ENCODE measurements at regions of chr20 and their contacts with region 1.

Region 1: DNA sequence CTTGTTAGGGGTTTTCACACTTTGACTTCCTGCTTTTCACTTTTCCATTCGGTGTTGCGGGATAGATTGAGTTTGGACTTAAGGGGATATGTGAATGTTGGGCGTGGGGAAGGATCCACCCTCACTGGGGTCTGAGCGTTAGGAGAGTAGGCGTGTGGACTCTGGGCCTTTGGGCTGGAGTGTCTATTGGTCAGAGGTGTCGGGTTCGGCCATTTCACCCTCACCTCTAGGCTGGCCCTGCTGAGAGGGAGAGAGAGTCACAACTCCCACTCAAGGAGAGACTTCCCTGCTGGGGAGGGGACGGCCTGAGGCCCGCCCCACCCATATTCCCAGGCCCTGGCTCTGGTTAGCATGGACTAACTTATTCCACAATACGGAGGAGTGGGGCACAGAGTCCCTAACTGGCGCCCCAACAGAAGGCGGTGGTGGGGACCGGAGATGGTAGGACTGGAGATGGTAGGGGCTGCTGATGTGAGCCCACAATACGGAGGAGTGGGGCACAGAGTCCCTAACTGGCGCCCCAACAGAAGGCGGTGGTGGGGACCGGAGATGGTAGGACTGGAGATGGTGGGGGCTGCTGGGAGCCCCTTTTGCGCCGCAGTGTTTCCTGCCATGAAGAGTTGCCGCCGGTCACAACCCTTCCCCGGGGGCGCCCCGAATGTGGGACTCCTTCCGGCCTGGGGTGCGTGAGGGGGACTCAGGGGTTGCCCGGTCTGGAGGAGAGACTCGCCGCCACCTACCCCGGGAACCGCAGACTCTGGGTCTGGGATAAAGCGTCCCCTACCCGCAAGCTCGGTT is 1.4 kb upstream of the PTPRA start:
- DNase-seq: no peak
- H3K4me3 ChIP-seq: peak overlapping the region; percentile 90
- H3K27me3 ChIP-seq: no peaks in the 10 kb centered on the region
- CTCF ChIP-seq: no peak

Region 2: GRCh38 chr20:2849529-2849928 is 22.3 kb before region 1 on chr20:
- CTCF ChIA-PET with region 1: interaction called, 10 read pairs
- POLR2A ChIA-PET with region 1: no interaction called
- DNase-seq: no peak
- H3K4me3 ChIP-seq: no peak overlapping the region
- H3K27me3 ChIP-seq: no peaks in the 10 kb centered on the region
- CTCF ChIP-seq: no peak

Region 3: DNA sequence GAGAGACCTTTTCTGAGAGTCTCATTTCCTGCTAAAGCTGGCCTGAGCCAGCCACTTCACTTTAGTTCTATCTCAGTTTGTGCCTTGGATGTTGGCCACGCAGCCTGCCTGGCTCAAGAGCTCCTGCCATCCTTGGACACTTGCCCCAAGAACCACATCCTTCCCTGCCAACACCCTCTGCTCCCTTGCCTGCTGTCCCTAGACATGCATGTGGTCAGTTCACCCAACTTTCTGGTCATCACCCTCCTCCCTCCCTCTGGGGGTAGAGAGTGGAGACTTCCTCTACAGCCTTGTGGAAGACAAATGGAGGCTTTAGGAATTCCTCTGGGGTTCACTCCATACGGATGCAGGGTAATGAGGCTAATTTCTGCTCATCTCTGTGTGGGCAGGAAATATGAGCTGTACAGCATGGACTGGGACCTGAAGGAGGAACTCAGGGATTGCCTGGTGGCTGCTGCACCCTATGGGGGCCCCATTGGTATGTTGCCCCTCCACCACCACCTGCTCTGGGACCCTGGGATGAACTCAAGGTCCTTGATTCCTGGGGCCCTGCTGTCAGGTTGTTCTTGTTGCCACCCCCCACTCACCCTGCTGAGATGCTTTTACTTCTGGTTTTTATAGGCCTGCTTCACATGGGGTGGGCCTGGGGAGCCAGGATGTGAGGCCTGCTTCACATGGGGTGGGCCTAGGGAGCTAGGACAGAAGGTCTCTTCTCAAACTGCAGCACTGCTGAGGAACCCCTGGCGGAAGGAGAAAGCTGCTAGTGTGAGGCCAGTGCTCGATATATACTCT is 12.3 kb before region 1 on chr20:
- CTCF ChIA-PET with region 1: interaction called, 5 read pairs
- POLR2A ChIA-PET with region 1: interaction called, 13 read pairs
- DNase-seq: no peak
- H3K4me3 ChIP-seq: no peak overlapping the region
- H3K27me3 ChIP-seq: no peaks in the 10 kb centered on the region
- CTCF ChIP-seq: no peak

Measured in BJ (cell line).